ENCODE measurements at regions of chr12 and their contacts with region 1.

Region 1: DNA sequence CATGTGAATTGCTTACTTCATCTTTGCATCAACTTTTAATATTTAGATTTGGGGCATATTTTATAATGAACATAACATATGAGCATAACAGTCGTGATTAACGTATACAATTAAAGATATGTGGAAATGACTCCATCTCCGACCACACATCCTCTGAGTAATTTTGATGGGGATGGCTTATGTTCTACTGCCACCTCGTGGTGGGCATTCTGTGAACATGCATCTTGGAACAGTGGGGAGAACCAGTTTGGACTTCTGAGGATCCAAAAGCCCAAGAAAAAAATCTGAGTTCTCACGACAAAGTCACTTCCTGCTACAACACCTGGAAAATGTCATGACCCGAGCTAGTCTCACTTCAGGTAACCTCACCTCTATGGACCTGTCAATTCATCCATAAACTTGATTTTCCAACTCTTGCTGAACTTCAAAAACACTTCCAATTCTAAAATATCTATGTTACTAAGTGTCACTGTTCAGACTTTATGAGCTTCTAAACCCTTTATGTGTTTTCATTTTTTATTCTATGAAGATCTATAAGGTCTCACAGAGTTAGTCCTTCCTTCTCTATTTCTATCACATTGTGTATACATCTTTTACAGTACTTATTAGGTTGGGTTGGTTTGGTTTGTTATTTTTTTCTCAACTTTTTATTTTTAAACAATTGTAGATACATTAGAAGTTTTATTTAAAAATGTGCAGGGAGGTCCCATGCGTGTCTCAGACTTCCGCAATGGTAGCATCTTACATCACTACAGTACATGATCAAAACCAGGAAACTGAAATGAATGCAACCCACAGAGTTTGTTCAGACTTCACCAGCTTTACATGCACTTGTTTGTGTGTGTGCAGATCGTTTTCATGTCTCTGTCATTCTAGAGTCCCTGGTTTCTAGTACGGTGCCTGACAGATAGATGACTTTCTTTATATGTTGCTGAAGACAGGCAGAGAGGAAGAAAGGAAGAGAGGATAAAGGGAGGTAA is 38.2 kb upstream of the STAB2 start:
- H3K4me3 Mint-ChIP-seq: no peak overlapping the region
- H3K27ac Mint-ChIP-seq: no peak overlapping the region
- H3K4me1 Mint-ChIP-seq: no peaks in the 10 kb centered on the region
- H3K27me3 Mint-ChIP-seq: peaks cover 7% of the 10 kb centered on the region

Region 2: GRCh38 chr12:102883204-102883799 is 665.6 kb before region 1 on chr12:
- intact Hi-C with region 1: loop called (anchors 1 kb)
- H3K4me3 Mint-ChIP-seq: no peak overlapping the region
- H3K27ac Mint-ChIP-seq: no peak overlapping the region
- H3K4me1 Mint-ChIP-seq: no peaks in the 10 kb centered on the region
- H3K27me3 Mint-ChIP-seq: peaks cover 2% of the 10 kb centered on the region

Region 3: GRCh38 chr12:103301642-103302591 is 247.0 kb before region 1 on chr12:
- intact Hi-C with region 1: no loop called
- H3K4me3 Mint-ChIP-seq: no peak overlapping the region
- H3K27ac Mint-ChIP-seq: no peak overlapping the region
- H3K4me1 Mint-ChIP-seq: no peaks in the 10 kb centered on the region
- H3K27me3 Mint-ChIP-seq: peaks cover 12% of the 10 kb centered on the region

Region 4: DNA sequence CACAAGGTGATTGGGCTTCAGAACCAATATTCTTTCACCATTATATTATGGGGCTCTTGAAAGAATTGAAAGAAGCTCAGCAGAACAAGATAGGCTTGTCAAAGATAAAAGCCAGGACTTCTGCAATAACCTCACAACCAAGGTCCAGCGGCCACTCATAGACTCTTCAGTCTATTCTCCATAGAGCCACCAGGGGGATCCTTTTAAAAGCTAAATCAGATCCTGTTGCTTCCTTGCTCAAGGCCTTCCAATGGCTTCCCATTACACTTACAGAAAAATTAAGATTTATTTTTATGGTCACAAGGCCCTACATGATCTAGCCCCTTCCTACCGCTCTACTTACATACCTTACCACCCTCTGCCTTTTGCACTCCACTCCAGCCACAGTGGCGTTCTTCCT is 222.7 kb before region 1 on chr12:
- intact Hi-C with region 1: loop called (anchors 2 kb)
- H3K4me3 Mint-ChIP-seq: no peak overlapping the region
- H3K27ac Mint-ChIP-seq: no peak overlapping the region
- H3K4me1 Mint-ChIP-seq: no peaks in the 10 kb centered on the region
- H3K27me3 Mint-ChIP-seq: no peaks in the 10 kb centered on the region

Measured in dendritic cell treated with granulocyte-macrophage colony-stimulating factor and Interleukin-4, amounts not matched to agents 40 ng/mL and 50 ng/mL, for 4 days (primary cell).